ENCODE measurements at regions of chr3 and their contacts with region 1.

Region 1: DNA sequence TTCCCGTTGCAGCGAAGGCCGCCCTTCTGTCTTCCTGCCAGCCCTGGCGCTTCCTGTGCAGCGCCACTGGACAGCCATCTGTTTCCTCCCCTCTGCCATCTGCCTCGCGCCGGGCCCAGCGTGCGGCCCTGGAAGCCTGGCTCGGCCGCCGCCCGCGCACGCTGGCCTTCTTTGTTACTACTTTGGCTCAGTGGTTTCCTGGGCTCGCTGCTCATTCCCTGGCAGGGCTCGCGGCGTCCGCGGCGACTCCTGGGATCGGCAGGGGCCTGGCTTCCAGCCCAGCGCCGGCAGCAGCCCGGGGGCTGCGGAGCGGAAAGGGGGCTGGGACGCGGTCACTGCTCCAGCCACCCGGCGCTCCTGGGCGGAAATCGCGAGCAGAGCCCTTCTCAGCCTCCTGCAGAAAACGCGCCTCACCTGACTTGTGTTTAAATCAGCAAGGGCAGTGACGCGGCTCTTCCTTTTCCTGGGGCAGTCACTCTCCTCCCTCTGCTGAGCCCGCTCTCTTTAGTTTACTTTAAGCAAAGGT is 10.0 kb downstream of the CMTM7 start:
- DNase-seq: peak; percentile 71
- H3K4me3 ChIP-seq: peak overlapping the region; percentile 37 to 45 (median 40)
- H3K27ac ChIP-seq: peak overlapping the region; percentile 66
- H3K4me1 ChIP-seq: peaks cover 61% of the 10 kb centered on the region
- H3K27me3 ChIP-seq: no peaks in the 10 kb centered on the region
- CTCF ChIP-seq: no peak

Region 2: GRCh38 chr3:32249184-32249782 is 152.3 kb before region 1 on chr3:
- CTCF ChIA-PET with region 1: no interaction called
- dilution Hi-C with region 1: no loop called
- in situ Hi-C with region 1: no loop called
- intact Hi-C with region 1: no loop called
- DNase-seq: peak; percentile 95
- H3K4me3 ChIP-seq: no peak overlapping the region
- H3K27ac ChIP-seq: peak overlapping the region; percentile 39
- H3K4me1 ChIP-seq: peaks cover 19% of the 10 kb centered on the region
- H3K27me3 ChIP-seq: no peaks in the 10 kb centered on the region
- CTCF ChIP-seq: no peak

Region 3: DNA sequence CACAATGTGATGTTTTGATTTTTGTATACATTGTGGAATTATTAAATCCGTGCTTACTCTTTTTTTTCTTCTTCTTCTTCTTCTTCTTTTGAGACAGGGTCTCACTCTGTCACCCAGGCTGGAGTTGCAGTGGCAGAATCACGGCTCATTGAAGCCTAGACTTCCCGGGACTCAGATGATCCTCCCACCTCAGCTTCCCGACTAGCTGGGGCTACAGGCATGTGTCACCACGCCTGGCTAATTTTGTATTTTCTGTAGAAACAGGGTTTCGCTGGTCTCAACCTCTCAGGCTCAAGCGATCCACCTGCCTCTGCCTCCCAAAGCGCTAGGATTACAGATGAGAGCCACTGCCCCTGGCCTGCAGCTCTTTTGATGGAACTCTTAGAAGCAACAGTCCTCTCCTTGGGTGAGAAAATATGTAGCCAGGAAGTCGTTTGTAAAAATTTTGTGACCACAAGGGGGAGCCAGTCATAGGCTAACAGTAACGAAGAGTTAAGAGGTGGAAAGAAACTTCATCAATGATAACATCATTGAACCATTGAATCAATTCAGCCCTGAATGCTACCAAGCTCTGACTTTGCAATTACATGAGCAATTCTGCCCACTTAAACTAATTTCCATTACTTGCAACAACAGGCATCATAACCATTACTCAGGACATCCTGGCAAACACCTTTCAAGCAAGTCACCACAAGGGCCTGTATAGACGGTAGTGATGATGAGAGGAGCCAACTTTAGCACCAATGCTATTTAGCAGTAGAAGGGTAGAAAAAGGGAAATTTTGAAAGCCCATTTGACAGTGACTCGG is 26.6 kb before region 1 on chr3:
- CTCF ChIA-PET with region 1: no interaction called
- dilution Hi-C with region 1: no loop called
- in situ Hi-C with region 1: no loop called
- intact Hi-C with region 1: loop called (anchors 1 kb)
- DNase-seq: peak; percentile 66
- H3K4me3 ChIP-seq: no peak overlapping the region
- H3K27ac ChIP-seq: no peak overlapping the region
- H3K4me1 ChIP-seq: peaks cover 10% of the 10 kb centered on the region
- H3K27me3 ChIP-seq: no peaks in the 10 kb centered on the region
- CTCF ChIP-seq: peak; percentile 50 to 68

Region 4: GRCh38 chr3:32443478-32443877 is 41.9 kb after region 1 on chr3:
- CTCF ChIA-PET with region 1: no interaction called
- dilution Hi-C with region 1: no loop called
- in situ Hi-C with region 1: no loop called
- intact Hi-C with region 1: loop called (anchors 2 kb)
- DNase-seq: peak; percentile 96
- H3K4me3 ChIP-seq: no peak overlapping the region
- H3K27ac ChIP-seq: peak overlapping the region; percentile 59
- H3K4me1 ChIP-seq: peaks cover 53% of the 10 kb centered on the region
- H3K27me3 ChIP-seq: no peaks in the 10 kb centered on the region
- CTCF ChIP-seq: no peak

Region 5: GRCh38 chr3:32460031-32460749 is 58.6 kb after region 1 on chr3:
- CTCF ChIA-PET with region 1: no interaction called
- dilution Hi-C with region 1: no loop called
- in situ Hi-C with region 1: loop called in 1 of 2 experiments (anchors 10 kb)
- intact Hi-C with region 1: no loop called
- DNase-seq: no peak
- H3K4me3 ChIP-seq: no peak overlapping the region
- H3K27ac ChIP-seq: no peak overlapping the region
- H3K4me1 ChIP-seq: peaks cover 35% of the 10 kb centered on the region
- H3K27me3 ChIP-seq: no peaks in the 10 kb centered on the region
- CTCF ChIP-seq: no peak

Measured in mammary epithelial cell (primary cell).